ENCODE measurements at regions of chr7 and their contacts with region 1.

Region 1: DNA sequence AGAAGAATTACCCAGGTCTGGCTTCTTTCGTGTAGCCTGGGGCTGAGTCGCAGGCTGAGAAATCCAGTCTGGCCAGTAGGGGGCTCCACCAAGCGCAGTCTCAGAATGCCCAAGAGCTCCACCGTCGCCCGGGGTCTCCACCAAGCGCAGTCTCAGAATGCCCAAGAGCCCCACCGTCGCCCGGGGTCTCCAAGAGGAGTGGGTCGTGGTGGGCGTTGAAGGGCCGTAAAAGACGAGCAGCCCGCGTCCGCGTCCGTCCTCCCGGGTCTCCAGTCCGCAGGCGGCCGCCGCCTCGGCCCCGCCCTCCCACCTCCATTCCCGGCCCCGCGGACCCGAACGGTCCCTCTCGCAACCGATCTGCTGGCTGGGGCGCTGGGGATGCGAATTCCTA is 895 bp upstream of the ZYX start:
- ATAC-seq: peak; percentile 14 to 63 (median 54)
- H3K4me3 ChIP-seq: peak overlapping the region; percentile 69 to 89 (median 85)
- H3K27ac ChIP-seq: peak overlapping the region; percentile 94 to 96
- H3K4me1 ChIP-seq: peaks cover 19 to 20% of the 10 kb centered on the region in 2 donors

Region 2: GRCh38 chr7:143287935-143288826 is 92.1 kb before region 1 on chr7 and contains the start of gene CASP2:
- in situ Hi-C with region 1: loop called in 1 of 9 experiments (anchors 25 kb)
- ATAC-seq: peak; percentile 89 to 98 (median 96)
- H3K4me3 ChIP-seq: peak within 1 kb of the TSS; percentile 72 to 87 (median 76)
- H3K27ac ChIP-seq: peak within 1 kb of the TSS; percentile 84 to 91
- H3K4me1 ChIP-seq: peaks cover 27% of the 10 kb centered on the region in 2 donors
- total RNA-seq, gene CASP2: 10.5 to 26.0 (median 14.1) TPM

Measured in motor neuron (in vitro differentiated cells).